Esophagus squamous epithelium (tissue), 5 donors: ENCODE measurements at regions of chr21 and their contacts with region 1.

Region 1: GRCh38 chr21:41068967-41069642 is 98.9 kb upstream of the BACE2 start:
- DNase-seq: no peak
- H3K4me3 ChIP-seq: peak overlapping the region in 2 of 4 donors; percentile 20 to 39
- H3K27ac ChIP-seq: no peak overlapping the region
- H3K4me1 ChIP-seq: peaks cover 3 to 9% (median 4%) of the 10 kb centered on the region in 3 donors
- H3K27me3 ChIP-seq: peaks cover 0 to 49% (median 0%) of the 10 kb centered on the region in 4 donors
- CTCF ChIP-seq: peak; percentile 23 to 85 (median 78)
- POLR2A ChIP-seq: no peak

Region 2: DNA sequence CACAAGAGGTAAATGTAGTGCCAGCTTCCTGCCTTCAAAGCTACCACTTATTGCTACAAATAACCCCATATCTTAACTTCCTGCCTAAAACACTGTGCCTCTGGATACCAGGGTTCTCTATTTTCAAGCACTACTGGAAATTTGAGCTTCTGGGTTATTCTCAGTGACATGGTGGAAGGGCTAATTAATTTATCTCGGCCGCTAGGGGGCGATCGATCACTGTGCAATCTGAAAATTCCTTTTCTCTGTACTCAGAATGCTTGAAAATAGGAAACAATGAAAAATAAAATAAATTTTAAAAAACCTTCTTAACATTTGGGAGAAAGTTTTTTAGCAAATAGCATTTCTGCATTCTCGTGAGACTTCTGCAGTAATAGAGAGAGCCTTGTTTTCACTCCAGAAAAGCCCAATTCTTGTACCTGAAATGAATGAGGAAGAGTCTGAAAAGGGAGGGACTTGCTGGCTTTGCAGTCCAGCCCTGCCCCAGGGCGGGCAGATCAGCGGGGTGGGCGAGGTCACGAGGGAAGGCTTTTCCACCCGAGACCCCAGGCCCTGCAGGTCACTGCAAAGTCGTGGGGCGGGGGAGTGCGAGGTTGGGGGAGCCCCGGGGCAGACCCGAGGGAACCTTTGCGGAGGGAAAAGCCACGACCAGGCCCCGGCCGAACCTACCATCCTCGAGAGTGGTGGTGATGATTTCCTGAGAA is 925.1 kb before region 1 on chr21:
- intact Hi-C with region 1: loop called (anchors 10 kb)
- DNase-seq: no peak
- H3K4me3 ChIP-seq: no peak overlapping the region
- H3K27ac ChIP-seq: no peak overlapping the region
- H3K4me1 ChIP-seq: no peaks in the 10 kb centered on the region
- H3K27me3 ChIP-seq: no peaks in the 10 kb centered on the region
- CTCF ChIP-seq: peak; percentile 55 to 87 (median 73)
- POLR2A ChIP-seq: no peak

Region 3: DNA sequence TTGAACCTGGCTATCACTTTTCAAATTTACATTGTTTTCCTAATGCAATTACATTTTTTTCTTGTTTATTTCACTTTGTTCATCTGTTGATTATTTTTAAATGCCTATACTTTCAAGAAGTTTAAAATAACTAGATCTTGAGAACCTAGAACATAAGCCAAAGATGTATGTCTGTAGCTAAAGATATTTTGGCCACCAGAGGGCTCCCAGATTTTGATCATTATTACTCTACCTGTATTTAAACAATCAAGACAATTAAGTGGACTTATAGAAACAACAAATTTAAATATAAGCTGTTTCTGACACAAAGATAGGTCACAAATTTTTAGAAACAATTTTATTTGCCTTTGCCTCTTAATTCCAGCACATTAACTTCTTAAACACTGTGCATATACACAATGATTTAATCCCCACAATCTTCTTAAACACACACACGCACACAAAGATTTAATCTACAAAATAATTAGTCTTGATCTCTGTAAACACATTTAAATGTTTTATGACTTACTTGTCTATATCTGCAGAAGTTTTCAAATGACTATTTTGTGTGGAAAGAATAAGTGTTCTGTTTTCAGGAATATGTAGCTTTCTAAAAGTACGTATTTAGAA is 602.1 kb before region 1 on chr21:
- intact Hi-C with region 1: loop called (anchors 5 kb)
- DNase-seq: no peak
- H3K4me3 ChIP-seq: no peak overlapping the region
- H3K27ac ChIP-seq: no peak overlapping the region
- H3K4me1 ChIP-seq: no peaks in the 10 kb centered on the region
- H3K27me3 ChIP-seq: no peaks in the 10 kb centered on the region
- CTCF ChIP-seq: peak in 5 of 6 experiments; percentile 27 to 51 (median 41)
- POLR2A ChIP-seq: no peak